ENCODE measurements at regions of chr3 and their contacts with region 1.

Region 1: GRCh38 chr3:143751643-143752178 is 96.6 kb downstream of the SLC9A9 start:
- DNase-seq: peak; percentile 43
- H3K4me3 Mint-ChIP-seq: peak overlapping the region; percentile 58
- H3K27ac Mint-ChIP-seq: peak overlapping the region; percentile 86
- H3K4me1 Mint-ChIP-seq: peaks cover 39% of the 10 kb centered on the region
- H3K27me3 Mint-ChIP-seq: no peaks in the 10 kb centered on the region

Region 2: GRCh38 chr3:143321058-143321769 is 430.5 kb before region 1 on chr3:
- CTCF ChIA-PET with region 1: no interaction called
- POLR2A ChIA-PET with region 1: no interaction called
- intact Hi-C with region 1: no loop called
- DNase-seq: no peak
- H3K4me3 Mint-ChIP-seq: no peak overlapping the region
- H3K27ac Mint-ChIP-seq: no peak overlapping the region
- H3K4me1 Mint-ChIP-seq: no peaks in the 10 kb centered on the region
- H3K27me3 Mint-ChIP-seq: no peaks in the 10 kb centered on the region

Region 3: DNA sequence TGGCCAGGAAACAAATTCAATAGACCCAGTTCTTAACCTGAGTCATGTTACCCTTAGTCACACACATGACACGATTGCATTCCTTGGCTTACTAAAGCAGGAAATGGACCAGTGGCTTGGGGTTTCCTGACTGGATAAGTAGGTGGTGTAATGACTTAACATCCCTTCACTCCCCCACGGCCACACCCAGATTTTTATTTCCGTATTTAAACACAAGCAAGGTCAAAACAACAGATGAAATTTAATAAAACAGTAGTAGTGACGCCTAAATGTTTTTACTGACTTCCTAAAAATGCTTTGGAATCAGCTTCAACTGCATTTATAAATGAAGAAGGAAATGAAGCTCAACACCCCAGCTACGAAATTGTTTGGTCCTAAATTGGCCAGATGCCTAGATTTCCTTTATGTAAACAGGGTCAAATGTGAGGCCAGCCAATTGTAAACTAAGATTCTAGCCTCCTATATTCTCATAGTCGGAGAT is 307.8 kb before region 1 on chr3:
- CTCF ChIA-PET with region 1: no interaction called
- POLR2A ChIA-PET with region 1: no interaction called
- intact Hi-C with region 1: loop called (anchors 5 kb)
- DNase-seq: peak; percentile 55
- H3K4me3 Mint-ChIP-seq: no peak overlapping the region
- H3K27ac Mint-ChIP-seq: no peak overlapping the region
- H3K4me1 Mint-ChIP-seq: peaks cover 29% of the 10 kb centered on the region
- H3K27me3 Mint-ChIP-seq: no peaks in the 10 kb centered on the region

Region 4: DNA sequence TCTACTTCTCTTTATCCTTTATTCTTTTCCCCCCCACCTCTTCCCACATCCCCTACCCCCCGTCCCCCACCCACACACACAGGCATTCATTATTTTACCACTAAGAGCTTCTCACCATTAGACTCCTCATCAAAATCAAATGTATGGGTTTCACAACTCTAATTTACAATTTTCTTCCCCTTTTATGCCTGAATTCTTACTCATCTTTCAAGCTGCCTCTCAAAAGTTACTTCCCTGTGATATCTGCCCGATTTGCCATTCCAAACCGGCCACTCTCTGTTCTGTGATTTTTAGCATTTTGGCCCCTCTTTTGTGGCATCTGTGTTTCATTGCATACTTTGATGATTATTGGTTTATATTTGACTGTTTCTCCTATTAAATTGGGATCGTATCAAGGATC is 54.3 kb after region 1 on chr3:
- CTCF ChIA-PET with region 1: no interaction called
- POLR2A ChIA-PET with region 1: no interaction called
- intact Hi-C with region 1: no loop called
- DNase-seq: no peak
- H3K4me3 Mint-ChIP-seq: no peak overlapping the region
- H3K27ac Mint-ChIP-seq: no peak overlapping the region
- H3K4me1 Mint-ChIP-seq: peaks cover 7% of the 10 kb centered on the region
- H3K27me3 Mint-ChIP-seq: no peaks in the 10 kb centered on the region

Measured in activated CD4-positive, alpha-beta memory T cell treated with anti-CD3 and anti-CD28 coated beads for 36 hours (primary cell).